Activated CD4-positive, alpha-beta T cell treated with anti-CD3 and anti-CD28 coated beads for 36 hours (primary cell): ENCODE measurements at regions of chr22 and their contacts with region 1.

Region 1: GRCh38 chr22:48335442-48336115 is 1492.1 kb downstream of the BRD1 start:
- DNase-seq: no peak
- ATAC-seq: no peak
- H3K4me3 Mint-ChIP-seq: no peak overlapping the region
- H3K27ac Mint-ChIP-seq: no peak overlapping the region
- H3K4me1 Mint-ChIP-seq: no peaks in the 10 kb centered on the region
- H3K27me3 Mint-ChIP-seq: peaks cover 4% of the 10 kb centered on the region

Region 2: GRCh38 chr22:48188231-48188721 is 147.3 kb before region 1 on chr22:
- CTCF ChIA-PET with region 1: no interaction called
- POLR2A ChIA-PET with region 1: no interaction called
- intact Hi-C with region 1: no loop called
- DNase-seq: peak; percentile 43
- ATAC-seq: no peak
- H3K4me3 Mint-ChIP-seq: no peak overlapping the region
- H3K27ac Mint-ChIP-seq: no peak overlapping the region
- H3K4me1 Mint-ChIP-seq: peaks cover 4% of the 10 kb centered on the region
- H3K27me3 Mint-ChIP-seq: peaks cover 3% of the 10 kb centered on the region

Region 3: DNA sequence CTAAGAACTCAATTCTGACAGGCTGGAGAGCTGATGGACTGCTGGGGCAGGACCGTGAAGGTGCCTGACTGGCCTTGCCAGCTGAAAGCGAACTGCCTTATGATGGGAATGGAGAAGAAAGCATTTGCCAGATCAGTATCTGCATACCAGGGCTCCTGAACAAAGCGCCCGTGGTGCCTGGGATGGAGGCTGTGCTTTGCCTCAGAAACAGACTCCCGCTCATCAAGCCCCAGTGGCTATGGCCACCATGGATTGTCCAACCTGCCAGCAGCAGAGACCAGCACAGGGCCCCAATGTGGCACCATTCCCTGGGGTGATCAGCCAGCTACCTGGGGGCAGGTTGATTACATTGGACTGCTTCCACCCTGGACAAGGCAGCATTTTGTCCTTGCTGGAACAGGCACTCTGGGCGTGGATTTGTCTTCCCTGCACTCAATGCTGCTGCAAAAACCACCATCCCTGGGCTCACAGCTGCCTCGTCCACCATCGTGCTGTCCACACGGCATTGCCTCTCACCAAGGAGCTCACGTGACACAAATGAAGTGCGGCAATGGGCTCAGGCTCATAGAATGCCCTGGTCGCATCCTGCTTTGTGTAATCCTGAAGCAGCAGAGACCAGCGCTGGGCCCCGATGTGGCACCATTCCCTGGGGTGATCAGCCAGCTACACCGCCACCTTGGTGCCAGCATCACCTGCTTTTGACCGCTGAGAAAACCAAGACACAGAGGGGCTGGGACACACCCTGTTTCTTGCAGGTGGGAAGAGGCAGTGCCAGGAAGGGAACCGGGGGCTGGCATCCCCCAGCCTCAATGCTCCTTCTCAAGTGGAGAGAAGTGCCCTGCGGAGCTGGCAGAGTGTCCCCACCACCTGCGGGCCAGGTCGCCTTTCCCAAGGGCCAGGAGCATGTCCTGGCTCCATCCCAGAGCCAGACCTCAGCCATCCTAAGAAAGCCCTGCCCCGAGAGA is 124.6 kb after region 1 on chr22:
- CTCF ChIA-PET with region 1: no interaction called
- POLR2A ChIA-PET with region 1: no interaction called
- intact Hi-C with region 1: no loop called
- DNase-seq: no peak
- ATAC-seq: no peak
- H3K4me3 Mint-ChIP-seq: no peak overlapping the region
- H3K27ac Mint-ChIP-seq: no peak overlapping the region
- H3K4me1 Mint-ChIP-seq: no peaks in the 10 kb centered on the region
- H3K27me3 Mint-ChIP-seq: peaks cover 4% of the 10 kb centered on the region

Region 4: DNA sequence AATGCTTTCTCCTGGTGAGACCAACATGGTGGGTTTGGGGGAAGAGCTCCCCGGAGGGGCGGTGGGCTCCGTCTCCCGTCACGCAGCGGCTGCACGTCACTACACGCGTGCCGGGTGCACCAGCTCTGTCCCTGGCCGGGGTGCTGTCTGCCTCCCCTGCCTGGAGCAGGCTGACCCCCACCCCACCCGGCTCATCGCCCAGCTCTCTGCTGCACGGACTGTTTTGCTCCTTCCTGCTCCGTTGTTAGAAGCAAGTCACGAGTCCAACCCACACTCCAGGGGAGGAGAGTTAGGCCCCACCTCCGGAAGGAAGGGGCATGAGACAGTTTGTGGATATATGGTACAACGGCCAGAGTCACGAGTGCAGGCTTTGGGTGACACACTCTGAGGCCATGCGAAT is 1127.2 kb after region 1 on chr22:
- CTCF ChIA-PET with region 1: no interaction called
- POLR2A ChIA-PET with region 1: no interaction called
- intact Hi-C with region 1: loop called in 1 of 2 experiments (anchors 5 kb)
- DNase-seq: no peak
- ATAC-seq: peak; percentile 26
- H3K4me3 Mint-ChIP-seq: no peak overlapping the region
- H3K27ac Mint-ChIP-seq: no peak overlapping the region
- H3K4me1 Mint-ChIP-seq: no peaks in the 10 kb centered on the region
- H3K27me3 Mint-ChIP-seq: no peaks in the 10 kb centered on the region